IMR-90 (cell line): ENCODE measurements at regions of chr14 and their contacts with region 1.

Region 1: GRCh38 chr14:64671591-64671990 is 32.6 kb upstream of the PLEKHG3 start:
- DNase-seq: peak; percentile 77
- ATAC-seq: peak; percentile 94
- H3K4me3 ChIP-seq: no peak overlapping the region
- H3K27ac ChIP-seq: no peak overlapping the region
- H3K4me1 ChIP-seq: no peaks in the 10 kb centered on the region; the same call in 1 of the 2 replicates
- H3K27me3 ChIP-seq: peaks cover 13% of the 10 kb centered on the region
- CTCF ChIP-seq: peak; percentile 79
- POLR2A ChIP-seq: no peak
- RAD21 ChIP-seq: peak; percentile 88

Region 2: GRCh38 chr14:64764641-64765520 is 93.3 kb after region 1 on chr14:
- CTCF ChIA-PET with region 1: interaction called, 9 read pairs
- POLR2A ChIA-PET with region 1: no interaction called
- dilution Hi-C with region 1: no loop called
- in situ Hi-C with region 1: loop called (anchors 5 kb)
- intact Hi-C with region 1: loop called (anchors 1 kb)
- DNase-seq: peak; percentile 74
- ATAC-seq: peak; percentile 84
- H3K4me3 ChIP-seq: no peak overlapping the region
- H3K27ac ChIP-seq: no peak overlapping the region
- H3K4me1 ChIP-seq: peaks cover 30% of the 10 kb centered on the region
- H3K27me3 ChIP-seq: peaks cover 12% of the 10 kb centered on the region
- CTCF ChIP-seq: peak; percentile 88
- POLR2A ChIP-seq: no peak
- RAD21 ChIP-seq: peak; percentile 89

Region 3: GRCh38 chr14:64823305-64823861 is 151.8 kb after region 1 on chr14:
- CTCF ChIA-PET with region 1: no interaction called
- POLR2A ChIA-PET with region 1: no interaction called
- dilution Hi-C with region 1: no loop called
- in situ Hi-C with region 1: no loop called
- intact Hi-C with region 1: loop called (anchors 2 kb)
- DNase-seq: peak; percentile 69
- ATAC-seq: peak; percentile 100
- H3K4me3 ChIP-seq: no peak overlapping the region
- H3K27ac ChIP-seq: no peak overlapping the region
- H3K4me1 ChIP-seq: no peaks in the 10 kb centered on the region; the same call in 1 of the 2 replicates
- H3K27me3 ChIP-seq: peaks cover 44% of the 10 kb centered on the region
- CTCF ChIP-seq: peak; percentile 77
- POLR2A ChIP-seq: no peak
- RAD21 ChIP-seq: peak; percentile 73

Region 4: GRCh38 chr14:64899958-64900357 is 228.4 kb after region 1 on chr14:
- CTCF ChIA-PET with region 1: no interaction called
- POLR2A ChIA-PET with region 1: no interaction called
- dilution Hi-C with region 1: no loop called
- in situ Hi-C with region 1: loop called (anchors 5 kb)
- intact Hi-C with region 1: no loop called
- DNase-seq: peak; percentile 22
- ATAC-seq: no peak
- H3K4me3 ChIP-seq: no peak overlapping the region
- H3K27ac ChIP-seq: no peak overlapping the region
- H3K4me1 ChIP-seq: no peaks in the 10 kb centered on the region
- H3K27me3 ChIP-seq: peaks cover 41% of the 10 kb centered on the region
- CTCF ChIP-seq: no peak
- POLR2A ChIP-seq: no peak
- RAD21 ChIP-seq: no peak